SK-N-SH (cell line): ENCODE measurements at regions of chr7 and their contacts with region 1.

Region 1: GRCh38 chr7:105013221-105013815 is 687 bp upstream of the KMT2E start:
- DNase-seq: peak; percentile 95
- H3K4me3 ChIP-seq: peak overlapping the region; percentile 79 to 100
- H3K27ac ChIP-seq: peak overlapping the region; percentile 99 to 100
- H3K4me1 ChIP-seq: peaks cover 23 to 37% of the 10 kb centered on the region in 2 experiments; a peak in 3 of 4 replicates
- H3K27me3 ChIP-seq: no peaks in the 10 kb centered on the region
- CTCF ChIP-seq: peak; percentile 66
- EP300 ChIP-seq: no peak
- RAD21 ChIP-seq: 0 out of 2 replicates have a peak, but pooled peaks have one; percentile 15

Region 2: DNA sequence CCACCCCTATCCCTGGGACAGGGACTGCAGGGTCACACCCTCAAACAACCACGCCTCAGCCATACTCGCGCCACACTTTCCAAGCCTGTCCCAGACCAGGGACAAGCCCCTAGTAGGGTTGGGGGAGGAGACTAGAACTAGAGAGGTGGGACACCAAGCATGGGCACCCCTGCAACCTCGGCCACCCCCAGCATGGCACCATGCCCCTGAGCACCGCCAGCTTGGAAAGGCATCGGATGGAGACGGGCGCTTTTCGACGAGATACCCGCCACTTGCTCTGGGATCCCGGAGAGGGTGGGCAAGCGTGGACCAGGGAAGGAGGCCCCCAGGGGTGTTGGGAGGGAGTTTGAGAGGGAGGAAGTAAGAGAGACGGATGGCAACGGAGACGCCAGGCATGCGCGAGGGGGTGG is 12.4 kb before region 1 on chr7:
- CTCF ChIA-PET with region 1: interaction called, 5 read pairs
- POLR2A ChIA-PET with region 1: interaction called, 15 read pairs
- DNase-seq: no peak
- H3K4me3 ChIP-seq: no peak overlapping the region
- H3K27ac ChIP-seq: no peak overlapping the region; a peak in 1 of 4 replicates
- H3K4me1 ChIP-seq: peaks cover 22 to 31% of the 10 kb centered on the region in 2 experiments
- H3K27me3 ChIP-seq: no peaks in the 10 kb centered on the region
- CTCF ChIP-seq: no peak
- EP300 ChIP-seq: no peak
- RAD21 ChIP-seq: no peak

Region 3: DNA sequence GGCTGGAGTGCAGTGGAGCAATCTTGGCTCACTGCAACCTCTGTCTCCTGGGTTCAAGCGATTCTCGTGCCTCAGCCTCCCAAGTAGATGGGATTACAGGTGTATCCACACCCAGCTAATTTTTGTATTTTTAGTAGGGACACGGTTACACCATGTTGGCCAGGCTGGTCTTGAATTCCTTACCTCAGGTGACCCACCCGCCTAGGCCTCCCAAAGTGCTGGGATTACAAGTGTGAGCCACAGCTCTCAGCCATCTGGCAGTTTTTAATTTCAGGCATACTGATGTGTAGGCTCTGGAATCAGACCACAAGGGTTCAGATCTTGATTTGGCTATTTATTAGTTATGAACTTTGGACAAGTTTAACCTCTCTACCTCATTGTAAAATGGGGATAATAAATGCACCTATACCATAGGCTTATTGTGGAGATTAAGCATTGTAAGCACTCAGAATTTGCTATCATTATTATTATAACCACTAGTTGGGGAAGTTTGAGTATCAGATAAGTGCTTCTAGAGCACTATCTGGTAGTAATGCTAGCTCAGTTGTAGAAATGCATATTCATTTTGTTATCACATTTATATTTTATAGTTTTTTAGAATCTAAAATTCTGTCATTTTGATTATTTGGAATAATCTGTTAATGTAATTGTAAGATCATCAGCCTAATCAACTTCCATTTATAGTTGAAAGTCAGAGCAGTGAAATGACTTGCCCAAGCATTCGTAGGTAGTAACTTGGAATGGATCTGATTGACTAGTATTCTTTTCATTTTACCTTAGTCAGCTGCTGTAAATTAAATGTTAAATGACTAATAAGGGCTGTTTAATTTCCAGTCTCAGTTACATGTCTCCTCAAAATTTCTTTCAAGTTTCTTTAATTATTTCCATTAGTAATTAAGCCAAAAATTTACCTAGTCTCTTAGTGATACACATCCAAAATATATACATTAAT is 23.2 kb after region 1 on chr7:
- CTCF ChIA-PET with region 1: interaction called, 14 read pairs
- POLR2A ChIA-PET with region 1: interaction called, 5 read pairs
- DNase-seq: no peak
- H3K4me3 ChIP-seq: no peak overlapping the region
- H3K27ac ChIP-seq: no peak overlapping the region; a peak in 1 of 4 replicates
- H3K4me1 ChIP-seq: peaks cover 10 to 11% of the 10 kb centered on the region in 2 experiments; a peak in 3 of 4 replicates
- H3K27me3 ChIP-seq: no peaks in the 10 kb centered on the region
- CTCF ChIP-seq: no peak
- EP300 ChIP-seq: no peak
- RAD21 ChIP-seq: no peak

Region 4: GRCh38 chr7:105149827-105150226 is 136.5 kb after region 1 on chr7:
- CTCF ChIA-PET with region 1: no interaction called
- POLR2A ChIA-PET with region 1: no interaction called
- DNase-seq: no peak
- H3K4me3 ChIP-seq: no peak overlapping the region
- H3K27ac ChIP-seq: peak overlapping the region in 1 of 2 experiments; percentile 44; a peak in 1 of 4 replicates
- H3K4me1 ChIP-seq: peaks cover 0 to 11% of the 10 kb centered on the region in 2 experiments; a peak in 1 of 4 replicates
- H3K27me3 ChIP-seq: no peaks in the 10 kb centered on the region
- CTCF ChIP-seq: no peak
- EP300 ChIP-seq: peak in 1 of 2 experiments; percentile 44; a peak in 1 of 4 replicates
- RAD21 ChIP-seq: no peak